ENCODE measurements at regions of chr4 and their contacts with region 1.

Region 1: DNA sequence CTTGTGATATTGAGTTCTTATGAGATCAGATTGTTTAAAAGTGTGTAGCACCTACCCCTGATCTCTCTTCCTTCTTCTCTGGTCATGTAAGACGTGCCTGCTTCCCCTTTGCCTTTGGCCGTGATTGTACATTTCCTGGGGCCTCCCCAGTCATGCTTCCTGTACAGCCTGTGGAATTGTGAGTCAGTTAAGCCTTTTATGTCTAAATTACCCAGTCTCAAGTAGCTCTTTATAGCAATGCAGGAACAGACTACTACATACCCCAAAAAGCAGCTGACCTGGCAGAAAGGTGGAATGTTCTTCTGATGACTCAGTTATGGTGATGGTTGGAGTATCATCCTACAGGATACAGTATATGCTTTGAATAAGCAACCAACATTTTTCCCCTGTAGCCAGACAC is 11.4 kb upstream of the MCUB start:
- DNase-seq: no peak
- H3K4me3 ChIP-seq: no peak overlapping the region
- H3K4me3 Mint-ChIP-seq: peak overlapping the region in 2 of 8 donors; percentile 9 to 30
- H3K27ac ChIP-seq: no peak overlapping the region
- H3K27ac Mint-ChIP-seq: peak overlapping the region in 6 of 7 donors; percentile 0 to 80 (median 7)
- H3K4me1 ChIP-seq: peaks cover 9% of the 10 kb centered on the region
- H3K4me1 Mint-ChIP-seq: peaks cover 16 to 24% (median 24%) of the 10 kb centered on the region in 4 donors
- H3K27me3 ChIP-seq: no peaks in the 10 kb centered on the region
- H3K27me3 Mint-ChIP-seq: no peaks in the 10 kb centered on the region

Region 2: DNA sequence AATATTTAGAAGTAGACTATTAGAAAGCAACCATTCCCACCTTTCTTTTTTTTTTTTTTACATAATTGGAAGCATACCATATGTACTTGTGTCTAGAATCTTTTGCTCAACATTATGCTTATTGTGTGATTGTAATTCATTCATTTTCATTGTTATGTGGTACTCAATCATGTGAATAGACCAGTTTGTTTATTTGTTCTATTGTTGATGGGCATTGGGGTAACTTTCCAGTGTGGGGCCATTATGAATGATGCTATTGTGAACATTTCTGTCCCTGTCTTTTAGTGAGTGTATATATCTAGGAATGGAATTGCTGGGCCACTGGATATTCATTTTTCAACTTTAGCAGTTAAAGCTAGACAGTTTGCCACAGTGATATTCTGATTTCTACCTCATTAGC is 51.1 kb before region 1 on chr4:
- CTCF ChIA-PET with region 1: no interaction called
- POLR2A ChIA-PET with region 1: no interaction called
- intact Hi-C with region 1: no loop called
- DNase-seq: no peak
- H3K4me3 ChIP-seq: no peak overlapping the region
- H3K4me3 Mint-ChIP-seq: no peak overlapping the region
- H3K27ac ChIP-seq: no peak overlapping the region
- H3K27ac Mint-ChIP-seq: peak overlapping the region in 2 of 7 donors; percentile 12 to 41
- H3K4me1 ChIP-seq: no peaks in the 10 kb centered on the region
- H3K4me1 Mint-ChIP-seq: peaks cover 0 to 2% (median 0%) of the 10 kb centered on the region in 4 donors
- H3K27me3 ChIP-seq: no peaks in the 10 kb centered on the region
- H3K27me3 Mint-ChIP-seq: no peaks in the 10 kb centered on the region

Region 3: GRCh38 chr4:109658871-109659410 is 110.3 kb after region 1 on chr4:
- CTCF ChIA-PET with region 1: interaction called, 12 read pairs
- POLR2A ChIA-PET with region 1: no interaction called
- intact Hi-C with region 1: no loop called
- DNase-seq: peak in 2 of 5 donors; percentile 22 to 24
- H3K4me3 ChIP-seq: no peak overlapping the region
- H3K4me3 Mint-ChIP-seq: no peak overlapping the region
- H3K27ac ChIP-seq: no peak overlapping the region
- H3K27ac Mint-ChIP-seq: peak overlapping the region in 4 of 7 donors; percentile 24 to 65 (median 47)
- H3K4me1 ChIP-seq: peaks cover 23% of the 10 kb centered on the region
- H3K4me1 Mint-ChIP-seq: peaks cover 22 to 49% (median 35%) of the 10 kb centered on the region in 4 donors
- H3K27me3 ChIP-seq: no peaks in the 10 kb centered on the region
- H3K27me3 Mint-ChIP-seq: no peaks in the 10 kb centered on the region

Measured in CD4-positive, alpha-beta memory T cell (primary cell).